ENCODE measurements at regions of chr12 and their contacts with region 1.

Region 1: GRCh38 chr12:22459838-22460490 is 84.4 kb downstream of the C2CD5 start:
- DNase-seq: peak; percentile 14
- H3K4me3 ChIP-seq: no peak overlapping the region
- H3K27ac ChIP-seq: no peak overlapping the region
- H3K4me1 ChIP-seq: no peaks in the 10 kb centered on the region; a peak in 1 of 4 replicates
- H3K27me3 ChIP-seq: no peaks in the 10 kb centered on the region
- CTCF ChIP-seq: peak; percentile 71
- EP300 ChIP-seq: no peak
- RAD21 ChIP-seq: peak; percentile 38; the same call in 1 of the 2 replicates

Region 2: DNA sequence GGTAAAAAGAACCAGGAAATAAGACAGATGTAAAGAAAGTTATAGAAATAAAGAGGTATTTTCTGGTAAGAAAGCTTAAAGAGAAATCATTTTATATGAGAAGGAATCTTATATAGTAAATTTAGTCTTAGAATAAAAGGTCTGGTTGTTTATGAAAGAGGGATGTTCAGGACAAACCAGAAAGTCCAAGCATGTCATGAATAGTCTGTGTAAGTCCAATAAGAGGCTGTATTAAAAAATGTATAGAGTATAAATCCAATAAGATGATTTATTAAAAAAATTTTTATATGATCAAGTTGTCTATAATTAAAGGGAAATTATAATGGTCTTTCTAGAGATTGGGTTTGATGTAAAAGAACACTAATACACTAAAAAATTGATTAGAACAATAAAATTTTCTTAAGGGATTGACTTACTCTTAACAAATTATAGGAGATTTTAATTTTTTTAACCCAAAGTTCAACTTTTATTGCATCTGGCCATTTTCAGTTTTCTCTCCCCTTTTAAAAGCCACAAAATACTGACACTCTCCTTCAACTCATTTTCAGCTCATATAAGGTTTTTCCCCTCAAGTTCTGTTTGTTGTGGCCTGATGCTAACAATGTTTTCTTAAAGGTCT is 160.6 kb before region 1 on chr12:
- CTCF ChIA-PET with region 1: no interaction called
- POLR2A ChIA-PET with region 1: no interaction called
- DNase-seq: no peak
- H3K4me3 ChIP-seq: no peak overlapping the region
- H3K27ac ChIP-seq: no peak overlapping the region
- H3K4me1 ChIP-seq: no peaks in the 10 kb centered on the region
- H3K27me3 ChIP-seq: no peaks in the 10 kb centered on the region
- CTCF ChIP-seq: no peak
- EP300 ChIP-seq: no peak
- RAD21 ChIP-seq: no peak

Region 3: GRCh38 chr12:22443379-22444316 is 16.3 kb before region 1 on chr12:
- CTCF ChIA-PET with region 1: interaction called, 26 read pairs
- POLR2A ChIA-PET with region 1: no interaction called
- DNase-seq: peak; percentile 57
- H3K4me3 ChIP-seq: peak overlapping the region in 1 of 2 experiments; percentile 36; a peak in 2 of 4 replicates
- H3K27ac ChIP-seq: no peak overlapping the region
- H3K4me1 ChIP-seq: peaks cover 0 to 8% of the 10 kb centered on the region in 2 experiments; a peak in 1 of 4 replicates
- H3K27me3 ChIP-seq: no peaks in the 10 kb centered on the region; the same call in 1 of the 2 replicates
- CTCF ChIP-seq: peak; percentile 79
- EP300 ChIP-seq: no peak
- RAD21 ChIP-seq: peak; percentile 86

Region 4: DNA sequence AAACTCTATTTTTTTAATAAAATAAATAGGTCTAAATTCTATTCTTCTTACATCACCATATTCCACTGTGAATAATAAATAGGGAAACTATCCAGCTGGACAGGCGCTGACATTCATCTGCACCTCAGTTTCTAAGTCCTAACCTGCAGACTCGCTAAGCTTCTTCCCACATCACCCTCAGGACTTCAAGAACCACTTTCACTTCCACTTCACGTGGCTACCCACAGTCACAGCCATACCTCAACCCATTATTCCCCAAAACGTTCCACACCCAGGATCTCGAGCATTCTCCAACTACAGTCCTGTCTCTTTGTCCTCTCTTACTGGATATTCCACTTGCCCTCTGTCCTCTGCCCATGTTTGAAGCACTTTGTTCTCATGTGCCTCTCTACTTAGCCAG is 13.2 kb after region 1 on chr12:
- CTCF ChIA-PET with region 1: interaction called, 25 read pairs
- POLR2A ChIA-PET with region 1: no interaction called
- DNase-seq: no peak
- H3K4me3 ChIP-seq: no peak overlapping the region
- H3K27ac ChIP-seq: no peak overlapping the region
- H3K4me1 ChIP-seq: no peaks in the 10 kb centered on the region
- H3K27me3 ChIP-seq: no peaks in the 10 kb centered on the region
- CTCF ChIP-seq: no peak
- EP300 ChIP-seq: no peak
- RAD21 ChIP-seq: no peak

Measured in SK-N-SH (cell line).